Activated B cell treated with CpG ODN at 0.5 μM for 24 hours (primary cell): ENCODE measurements at regions of chr10 and their contacts with region 1.

Region 1: DNA sequence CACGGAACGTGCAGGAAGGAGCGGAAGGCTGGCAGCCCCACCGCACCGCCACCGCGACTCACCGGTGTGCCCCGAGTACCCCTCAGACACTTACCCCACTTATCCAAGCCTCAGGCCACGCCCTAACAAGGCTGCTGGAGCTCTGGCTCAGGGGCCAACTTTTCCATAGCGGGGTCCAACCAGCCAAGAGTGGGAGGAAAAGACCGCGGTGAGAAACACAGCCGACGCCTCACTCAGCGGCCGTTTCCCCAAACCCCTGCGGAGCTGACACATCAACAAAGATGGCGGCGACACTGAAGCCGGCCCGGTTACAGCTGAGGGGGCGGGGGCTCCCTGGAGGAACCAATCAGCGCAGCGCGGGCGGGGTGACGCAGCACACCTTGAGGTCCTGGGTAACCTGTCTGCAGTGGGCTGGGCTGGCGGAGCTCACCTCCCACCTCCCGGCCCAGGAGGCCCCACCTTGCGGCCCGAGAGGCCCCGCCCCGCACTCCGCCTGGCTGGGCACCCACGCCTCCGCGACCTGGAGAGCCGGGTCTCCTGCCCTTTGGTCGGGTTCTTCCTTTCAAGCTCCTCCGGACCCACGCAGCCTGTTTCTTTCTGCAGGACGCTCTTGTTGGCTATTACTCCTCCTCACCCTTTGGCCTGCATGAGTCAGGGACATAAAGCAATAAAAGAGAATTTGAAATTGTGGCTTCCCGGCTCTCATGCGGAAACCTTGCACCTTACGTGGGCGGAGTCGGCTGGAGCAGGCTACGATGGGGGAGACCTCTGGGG is at the start of gene CCDC186:
- DNase-seq: peak; percentile 96
- ATAC-seq: peak; percentile 98
- H3K4me3 Mint-ChIP-seq: peak within 1 kb of the TSS; percentile 97
- H3K27ac Mint-ChIP-seq: peak within 1 kb of the TSS; percentile 95
- H3K4me1 Mint-ChIP-seq: peaks cover 29% of the 10 kb centered on the region
- H3K27me3 Mint-ChIP-seq: peaks cover 1% of the 10 kb centered on the region
- CTCF ChIP-seq: no peak
- total RNA-seq, gene CCDC186: 19.7 and 24.8 TPM in 2 replicates

Region 2: GRCh38 chr10:112375721-112376395 is 1798.2 kb before region 1 on chr10:
- CTCF ChIA-PET with region 1: no interaction called
- POLR2A ChIA-PET with region 1: interaction called, 3 read pairs
- intact Hi-C with region 1: loop called (anchors 10 kb)
- DNase-seq: peak; percentile 47
- ATAC-seq: peak; percentile 85
- H3K4me3 Mint-ChIP-seq: peak overlapping the region; percentile 100
- H3K27ac Mint-ChIP-seq: peak overlapping the region; percentile 99
- H3K4me1 Mint-ChIP-seq: peaks cover 61% of the 10 kb centered on the region
- H3K27me3 Mint-ChIP-seq: no peaks in the 10 kb centered on the region
- CTCF ChIP-seq: no peak

Region 3: GRCh38 chr10:114024876-114025610 is 149.1 kb before region 1 on chr10:
- CTCF ChIA-PET with region 1: no interaction called
- POLR2A ChIA-PET with region 1: interaction called, 3 read pairs
- intact Hi-C with region 1: loop called (anchors 5 kb)
- DNase-seq: peak; percentile 25
- ATAC-seq: peak; percentile 80
- H3K4me3 Mint-ChIP-seq: peak overlapping the region; percentile 71
- H3K27ac Mint-ChIP-seq: peak overlapping the region; percentile 82
- H3K4me1 Mint-ChIP-seq: peaks cover 33% of the 10 kb centered on the region
- H3K27me3 Mint-ChIP-seq: peaks cover 5% of the 10 kb centered on the region
- CTCF ChIP-seq: no peak

Region 4: DNA sequence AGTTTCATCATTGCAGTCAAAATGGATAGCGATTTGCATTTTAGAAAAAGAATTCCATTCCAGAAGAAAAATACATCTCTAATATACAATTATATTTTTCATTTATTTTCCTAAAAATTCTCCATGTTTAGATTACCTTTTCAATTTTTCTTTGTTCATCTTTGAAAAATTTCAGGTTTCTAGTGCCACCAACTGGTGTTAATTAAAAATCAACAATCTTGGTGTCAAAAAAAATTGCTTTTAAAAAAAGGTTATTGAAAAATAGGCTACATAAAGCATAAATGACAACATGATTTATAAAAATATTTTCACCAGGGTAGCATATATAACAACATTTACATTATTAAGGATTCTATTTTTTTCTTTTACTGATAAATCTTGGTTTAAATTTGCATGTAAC is 53.1 kb before region 1 on chr10:
- CTCF ChIA-PET with region 1: no interaction called
- POLR2A ChIA-PET with region 1: no interaction called
- intact Hi-C with region 1: no loop called
- DNase-seq: no peak
- ATAC-seq: no peak
- H3K4me3 Mint-ChIP-seq: no peak overlapping the region
- H3K27ac Mint-ChIP-seq: no peak overlapping the region
- H3K4me1 Mint-ChIP-seq: no peaks in the 10 kb centered on the region
- H3K27me3 Mint-ChIP-seq: no peaks in the 10 kb centered on the region
- CTCF ChIP-seq: no peak

Region 5: DNA sequence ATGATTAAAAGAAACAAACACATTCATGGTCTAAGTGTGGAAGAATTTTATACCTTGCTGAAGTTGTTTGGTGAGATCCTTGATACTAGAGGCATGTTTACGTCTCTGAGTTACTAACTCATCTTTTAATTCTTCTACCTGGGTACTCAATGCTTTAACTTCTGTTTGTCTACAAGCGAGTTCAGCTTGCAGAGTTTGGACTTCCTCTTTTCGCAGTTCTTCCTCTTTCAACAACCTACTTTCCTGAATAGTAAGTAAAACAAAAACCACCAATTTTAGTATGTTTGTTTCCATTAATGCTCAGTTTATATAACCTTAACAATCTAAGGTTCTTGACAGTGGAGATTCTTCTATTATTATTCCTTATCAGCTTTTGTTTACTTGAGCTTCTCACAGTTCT is 43.0 kb before region 1 on chr10:
- CTCF ChIA-PET with region 1: no interaction called
- POLR2A ChIA-PET with region 1: interaction called, 5 read pairs
- intact Hi-C with region 1: loop called (anchors 1 kb)
- DNase-seq: no peak
- ATAC-seq: peak; percentile 77
- H3K4me3 Mint-ChIP-seq: no peak overlapping the region
- H3K27ac Mint-ChIP-seq: peak overlapping the region; percentile 19
- H3K4me1 Mint-ChIP-seq: peaks cover 17% of the 10 kb centered on the region
- H3K27me3 Mint-ChIP-seq: no peaks in the 10 kb centered on the region
- CTCF ChIP-seq: no peak

Region 6: DNA sequence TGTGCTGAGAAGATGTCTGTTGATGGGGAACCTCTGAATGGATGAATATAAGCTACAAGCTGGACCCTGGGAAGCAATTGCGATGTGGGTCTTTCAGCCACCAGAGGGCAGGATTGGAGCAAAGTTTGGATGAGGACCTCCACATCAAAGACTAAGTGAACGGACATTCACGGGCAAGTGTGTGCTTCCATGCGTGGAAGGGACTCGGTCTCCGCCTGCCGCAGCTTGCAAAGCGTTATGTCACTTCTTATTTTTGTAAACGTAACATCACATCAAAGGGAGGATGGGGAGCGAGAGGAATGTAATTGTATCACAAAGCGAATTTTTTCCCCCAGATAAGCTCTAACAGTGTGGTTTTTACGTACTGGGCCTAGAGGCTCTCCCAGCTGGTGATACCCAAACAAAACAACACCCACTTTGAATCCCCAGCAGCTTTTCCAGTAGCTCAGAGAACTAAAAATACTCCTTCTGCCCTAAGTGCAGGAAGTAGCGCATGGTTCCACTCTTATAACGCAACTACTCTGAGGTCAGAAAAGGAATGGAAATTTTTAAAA is 130.0 kb after region 1 on chr10:
- CTCF ChIA-PET with region 1: no interaction called
- POLR2A ChIA-PET with region 1: no interaction called
- intact Hi-C with region 1: loop called (anchors 5 kb)
- DNase-seq: peak; percentile 46
- ATAC-seq: peak; percentile 53
- H3K4me3 Mint-ChIP-seq: peak overlapping the region; percentile 86
- H3K27ac Mint-ChIP-seq: peak overlapping the region; percentile 47
- H3K4me1 Mint-ChIP-seq: peaks cover 12% of the 10 kb centered on the region
- H3K27me3 Mint-ChIP-seq: no peaks in the 10 kb centered on the region
- CTCF ChIP-seq: peak; percentile 15

Region 7: GRCh38 chr10:114526504-114527238 is 352.6 kb after region 1 on chr10:
- CTCF ChIA-PET with region 1: no interaction called
- POLR2A ChIA-PET with region 1: interaction called, 7 read pairs
- intact Hi-C with region 1: loop called (anchors 10 kb)
- DNase-seq: peak; percentile 67
- ATAC-seq: peak; percentile 96
- H3K4me3 Mint-ChIP-seq: peak overlapping the region; percentile 95
- H3K27ac Mint-ChIP-seq: peak overlapping the region; percentile 99
- H3K4me1 Mint-ChIP-seq: peaks cover 63% of the 10 kb centered on the region
- H3K27me3 Mint-ChIP-seq: no peaks in the 10 kb centered on the region
- CTCF ChIP-seq: no peak

Region 8: DNA sequence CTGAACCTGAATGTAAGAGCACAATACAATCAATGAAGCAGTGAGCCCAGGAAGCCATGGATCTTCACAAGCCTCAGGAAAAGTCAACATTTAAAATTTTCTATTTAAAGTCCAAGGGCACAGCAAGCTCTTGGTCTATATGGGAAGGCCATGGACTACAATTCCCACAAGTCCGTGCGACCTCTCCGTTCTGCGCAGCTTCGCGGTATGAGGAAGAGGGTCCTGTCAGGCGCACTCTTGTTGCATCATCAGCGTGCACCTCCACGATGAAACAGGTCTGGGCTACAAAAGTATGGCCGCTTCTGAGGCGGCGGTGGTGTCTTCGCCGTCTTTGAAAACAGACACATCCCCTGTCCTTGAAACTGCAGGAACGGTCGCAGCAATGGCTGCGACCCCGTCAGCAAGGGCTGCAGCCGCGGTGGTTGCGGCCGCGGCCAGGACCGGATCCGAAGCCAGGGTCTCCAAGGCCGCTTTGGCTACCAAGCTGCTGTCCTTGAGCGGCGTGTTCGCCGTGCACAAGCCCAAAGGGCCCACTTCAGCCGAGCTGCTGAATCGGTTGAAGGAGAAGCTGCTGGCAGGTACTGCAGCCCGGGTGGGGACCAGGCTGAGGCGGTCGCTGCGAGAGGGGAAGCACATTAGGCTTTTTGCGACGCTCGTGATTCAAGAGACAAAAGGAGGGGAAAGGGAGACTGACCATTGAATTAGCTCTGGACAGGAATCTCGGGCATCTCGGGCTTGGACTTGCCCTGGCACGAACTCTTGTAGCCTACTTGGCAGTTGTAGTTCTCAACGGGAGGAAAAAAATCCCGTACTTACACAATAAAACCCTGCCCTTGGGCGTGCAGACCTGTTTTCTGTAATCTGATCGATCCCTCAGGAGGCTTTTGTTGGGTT is 764.1 kb after region 1 on chr10 and contains the start of gene TRUB1:
- CTCF ChIA-PET with region 1: no interaction called
- POLR2A ChIA-PET with region 1: no interaction called
- intact Hi-C with region 1: loop called (anchors 1 kb)
- DNase-seq: peak; percentile 72
- ATAC-seq: peak; percentile 100
- H3K4me3 Mint-ChIP-seq: peak within 1 kb of the TSS; percentile 97
- H3K27ac Mint-ChIP-seq: peak within 1 kb of the TSS; percentile 95
- H3K4me1 Mint-ChIP-seq: peaks cover 24% of the 10 kb centered on the region
- H3K27me3 Mint-ChIP-seq: peaks cover 2% of the 10 kb centered on the region
- CTCF ChIP-seq: no peak
- total RNA-seq, gene TRUB1: 13.0 and 13.9 TPM in 2 replicates